ENCODE measurements at regions of chr9 and their contacts with region 1.

Region 1: GRCh38 chr9:11064897-11065296 is 452.1 kb upstream of the PTPRD start:
- DNase-seq: no peak
- ATAC-seq: no peak
- H3K4me3 ChIP-seq: no peak overlapping the region
- H3K4me3 Mint-ChIP-seq: no peak overlapping the region
- H3K27ac ChIP-seq: no peak overlapping the region
- H3K27ac Mint-ChIP-seq: no peak overlapping the region
- H3K4me1 ChIP-seq: no peaks in the 10 kb centered on the region
- H3K4me1 Mint-ChIP-seq: no peaks in the 10 kb centered on the region
- H3K27me3 ChIP-seq: no peaks in the 10 kb centered on the region
- H3K27me3 Mint-ChIP-seq: no peaks in the 10 kb centered on the region
- CTCF ChIP-seq: no peak

Region 2: DNA sequence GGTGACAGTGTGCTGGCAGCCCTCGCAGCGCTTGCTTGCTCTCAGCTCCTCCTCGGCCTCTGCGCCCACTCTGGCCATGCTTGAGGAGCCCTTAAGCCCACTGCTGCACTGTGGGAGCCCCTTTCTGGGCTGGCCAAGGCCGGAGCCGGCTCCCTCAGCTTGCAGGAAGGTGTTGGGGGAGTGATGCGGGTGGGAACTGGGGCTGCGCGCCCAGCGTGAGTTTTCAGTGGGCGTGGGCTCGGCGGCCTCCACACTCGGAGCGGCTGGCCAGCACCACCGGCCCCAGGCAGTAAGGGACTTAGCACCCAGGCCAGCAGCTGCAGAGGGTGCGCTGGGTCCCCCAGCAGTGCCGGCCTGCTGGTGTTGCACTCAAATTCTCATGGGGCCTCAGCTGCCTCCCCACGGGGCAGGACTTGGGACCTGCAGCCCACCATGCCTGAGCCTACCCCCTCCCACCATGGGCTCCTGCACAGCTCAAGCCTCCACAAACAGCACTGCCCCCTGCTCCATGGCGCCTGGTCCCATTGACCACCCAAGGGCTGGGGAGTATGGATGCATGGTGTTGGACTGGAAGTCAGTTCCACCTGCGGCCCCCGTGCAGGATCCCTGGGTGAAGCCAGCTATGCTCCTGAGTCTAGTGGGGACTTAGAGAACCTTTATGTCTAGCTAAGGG is 229.0 kb before region 1 on chr9:
- CTCF ChIA-PET with region 1: no interaction called
- POLR2A ChIA-PET with region 1: no interaction called
- intact Hi-C with region 1: no loop called
- DNase-seq: no peak
- ATAC-seq: no peak
- H3K4me3 ChIP-seq: no peak overlapping the region
- H3K4me3 Mint-ChIP-seq: no peak overlapping the region
- H3K27ac ChIP-seq: no peak overlapping the region
- H3K27ac Mint-ChIP-seq: no peak overlapping the region
- H3K4me1 ChIP-seq: no peaks in the 10 kb centered on the region
- H3K4me1 Mint-ChIP-seq: no peaks in the 10 kb centered on the region
- H3K27me3 ChIP-seq: no peaks in the 10 kb centered on the region
- H3K27me3 Mint-ChIP-seq: no peaks in the 10 kb centered on the region
- CTCF ChIP-seq: no peak

Region 3: GRCh38 chr9:11128156-11128555 is 63.3 kb after region 1 on chr9:
- CTCF ChIA-PET with region 1: no interaction called
- POLR2A ChIA-PET with region 1: no interaction called
- intact Hi-C with region 1: loop called in 1 of 2 experiments (anchors 5 kb)
- DNase-seq: no peak
- ATAC-seq: no peak
- H3K4me3 ChIP-seq: no peak overlapping the region
- H3K4me3 Mint-ChIP-seq: no peak overlapping the region
- H3K27ac ChIP-seq: no peak overlapping the region
- H3K27ac Mint-ChIP-seq: no peak overlapping the region
- H3K4me1 ChIP-seq: no peaks in the 10 kb centered on the region
- H3K4me1 Mint-ChIP-seq: no peaks in the 10 kb centered on the region
- H3K27me3 ChIP-seq: no peaks in the 10 kb centered on the region
- H3K27me3 Mint-ChIP-seq: no peaks in the 10 kb centered on the region
- CTCF ChIP-seq: no peak

Region 4: DNA sequence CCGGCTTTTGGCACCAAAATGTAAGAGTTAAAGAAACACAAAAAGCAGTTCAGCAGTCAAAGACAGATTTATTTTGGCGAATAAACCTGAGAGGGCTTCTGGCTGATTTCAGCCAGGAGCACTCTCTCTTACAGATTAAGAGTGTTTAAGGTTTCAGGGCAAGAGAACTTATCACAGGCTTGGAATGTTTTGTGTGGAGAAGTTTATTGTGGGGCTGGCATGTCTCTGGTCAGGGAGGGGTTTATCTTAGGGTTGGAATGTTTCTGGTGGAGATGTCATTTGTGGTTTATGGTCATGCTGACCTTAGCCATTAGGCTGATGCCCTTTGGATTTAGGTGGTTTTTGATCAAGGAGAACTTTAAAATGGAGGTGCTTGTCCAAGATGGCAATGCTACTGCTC is 170.2 kb after region 1 on chr9:
- CTCF ChIA-PET with region 1: no interaction called
- POLR2A ChIA-PET with region 1: no interaction called
- intact Hi-C with region 1: no loop called
- DNase-seq: no peak
- ATAC-seq: no peak
- H3K4me3 ChIP-seq: no peak overlapping the region
- H3K4me3 Mint-ChIP-seq: no peak overlapping the region
- H3K27ac ChIP-seq: no peak overlapping the region
- H3K27ac Mint-ChIP-seq: no peak overlapping the region
- H3K4me1 ChIP-seq: no peaks in the 10 kb centered on the region
- H3K4me1 Mint-ChIP-seq: no peaks in the 10 kb centered on the region
- H3K27me3 ChIP-seq: no peaks in the 10 kb centered on the region
- H3K27me3 Mint-ChIP-seq: no peaks in the 10 kb centered on the region
- CTCF ChIP-seq: no peak